ENCODE measurements at regions of chr19 and their contacts with region 1.

Region 1: DNA sequence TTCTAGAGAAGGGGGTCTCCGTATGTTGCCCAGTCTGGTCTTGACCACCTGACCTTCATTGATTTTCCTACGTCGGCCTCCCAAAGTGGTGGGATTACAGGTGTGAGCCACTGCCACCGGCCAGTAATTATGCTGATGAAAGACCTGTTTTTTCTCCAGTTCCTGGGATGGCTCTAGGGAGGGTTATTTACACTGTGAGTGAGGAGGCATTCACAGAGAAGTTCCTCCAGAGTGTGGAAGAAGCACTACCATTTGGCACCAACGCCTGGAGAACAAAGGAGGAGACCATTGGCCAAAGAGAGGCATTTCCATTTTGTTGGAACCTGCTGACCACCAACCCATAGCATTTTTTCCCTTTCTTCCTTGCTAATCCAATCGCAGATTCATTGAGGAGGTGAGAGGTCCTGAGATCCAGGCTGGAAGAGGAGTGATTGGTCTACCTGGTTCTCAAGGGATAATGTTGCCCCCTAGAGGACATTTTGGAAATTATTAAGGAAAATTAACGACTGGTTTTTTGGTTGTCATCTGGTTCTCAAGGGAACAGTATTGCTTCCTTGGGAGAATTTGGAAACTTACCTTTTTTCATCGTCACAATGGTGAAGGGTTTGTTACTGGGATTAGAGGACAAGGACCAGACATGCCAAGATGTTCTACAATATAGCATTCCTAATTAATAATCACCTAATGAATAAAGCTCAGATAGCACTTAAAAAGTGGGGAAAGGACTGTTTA is 5.5 kb upstream of the SAE1 start:
- DNase-seq: no peak
- ATAC-seq: peak; percentile 54
- H3K4me3 Mint-ChIP-seq: no peak overlapping the region
- H3K27ac Mint-ChIP-seq: no peak overlapping the region
- H3K4me1 Mint-ChIP-seq: peaks cover 3% of the 10 kb centered on the region
- H3K27me3 Mint-ChIP-seq: no peaks in the 10 kb centered on the region
- CTCF ChIP-seq: no peak

Region 2: DNA sequence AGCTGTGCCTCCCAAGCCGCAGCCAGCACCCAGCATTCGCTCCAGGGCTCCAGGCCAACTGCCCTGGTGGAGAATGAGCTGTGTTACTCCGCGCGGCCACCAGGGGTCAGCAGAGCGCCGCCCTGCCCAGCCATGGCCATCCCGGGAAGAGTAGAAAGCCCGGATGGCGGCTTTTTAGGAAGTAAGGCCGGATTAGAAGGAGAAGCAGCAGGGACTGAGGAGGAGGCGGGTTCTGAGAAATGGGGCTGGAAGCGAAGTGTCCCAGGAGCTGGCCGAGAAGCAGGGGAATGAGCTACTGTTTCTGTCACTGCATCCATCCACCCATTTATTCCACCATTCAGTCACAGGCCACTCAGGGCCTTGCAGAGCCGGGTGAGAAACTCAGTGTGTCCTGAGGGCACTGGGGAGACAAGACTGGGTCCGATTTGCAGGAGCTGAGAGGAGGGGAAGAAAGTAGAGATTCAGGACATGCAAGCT is 112.0 kb before region 1 on chr19:
- CTCF ChIA-PET with region 1: interaction called, 26 read pairs
- POLR2A ChIA-PET with region 1: interaction called, 3 read pairs
- intact Hi-C with region 1: loop called (anchors 1 kb)
- DNase-seq: peak; percentile 69
- ATAC-seq: peak; percentile 82
- H3K4me3 Mint-ChIP-seq: no peak overlapping the region
- H3K27ac Mint-ChIP-seq: no peak overlapping the region
- H3K4me1 Mint-ChIP-seq: peaks cover 8% of the 10 kb centered on the region
- H3K27me3 Mint-ChIP-seq: peaks cover 7% of the 10 kb centered on the region
- CTCF ChIP-seq: peak; percentile 99

Region 3: DNA sequence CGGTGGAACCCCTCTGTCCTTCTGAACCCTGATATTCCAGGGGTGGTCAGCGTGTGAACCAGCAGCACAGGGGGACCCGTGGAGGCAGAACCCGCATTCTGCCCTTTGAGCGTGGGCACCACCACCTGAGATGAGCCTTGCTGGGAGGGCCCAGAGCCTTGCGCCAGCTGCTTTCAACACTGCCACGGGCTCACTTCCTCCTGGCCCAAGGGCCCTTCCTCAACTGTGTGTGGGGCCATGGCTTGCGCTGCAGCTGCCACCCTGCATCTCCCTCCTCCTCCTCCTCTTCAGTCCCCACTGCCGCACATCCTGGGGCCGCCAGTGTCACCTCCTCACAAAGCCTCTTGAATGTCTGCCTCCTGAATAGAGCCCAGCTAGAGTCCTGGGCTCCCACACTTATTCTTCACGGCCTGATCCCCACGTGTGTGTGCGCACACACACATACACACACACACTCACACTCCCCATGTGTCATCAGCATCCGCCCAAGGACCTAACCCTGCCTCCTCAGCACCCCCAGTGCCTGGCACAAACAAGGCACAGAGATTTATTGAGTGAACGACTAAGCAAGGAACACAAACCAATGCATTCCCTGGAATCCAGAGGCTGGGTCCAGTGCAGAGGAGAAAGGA is 49.8 kb before region 1 on chr19:
- CTCF ChIA-PET with region 1: interaction called, 58 read pairs
- POLR2A ChIA-PET with region 1: interaction called, 8 read pairs
- intact Hi-C with region 1: loop called (anchors 1 kb)
- DNase-seq: no peak
- ATAC-seq: no peak
- H3K4me3 Mint-ChIP-seq: no peak overlapping the region
- H3K27ac Mint-ChIP-seq: no peak overlapping the region
- H3K4me1 Mint-ChIP-seq: peaks cover 4% of the 10 kb centered on the region
- H3K27me3 Mint-ChIP-seq: no peaks in the 10 kb centered on the region
- CTCF ChIP-seq: no peak

Region 4: DNA sequence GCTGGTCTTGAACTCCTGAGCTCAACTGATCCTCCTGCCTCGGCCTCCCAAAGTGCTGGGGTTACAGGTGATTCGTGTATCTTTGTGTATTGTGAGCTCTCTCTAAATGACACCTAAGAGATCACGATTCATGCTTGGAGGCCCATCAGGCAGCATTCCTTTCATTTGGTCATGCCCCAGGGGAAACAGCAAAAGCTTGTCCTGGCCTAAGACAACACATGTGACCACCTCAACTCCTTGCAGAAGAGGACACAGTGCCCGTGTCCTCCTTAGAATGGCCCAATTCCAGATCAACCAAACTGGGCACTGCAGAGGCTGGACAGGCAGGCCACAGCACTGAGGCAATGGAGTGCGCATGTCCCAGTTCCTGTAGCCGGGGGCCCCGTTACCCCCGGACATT is 44.0 kb before region 1 on chr19:
- CTCF ChIA-PET with region 1: interaction called, 58 read pairs
- POLR2A ChIA-PET with region 1: interaction called, 8 read pairs
- intact Hi-C with region 1: loop called (anchors 1 kb)
- DNase-seq: no peak
- ATAC-seq: no peak
- H3K4me3 Mint-ChIP-seq: no peak overlapping the region
- H3K27ac Mint-ChIP-seq: no peak overlapping the region
- H3K4me1 Mint-ChIP-seq: peaks cover 10% of the 10 kb centered on the region
- H3K27me3 Mint-ChIP-seq: no peaks in the 10 kb centered on the region
- CTCF ChIP-seq: no peak

Measured in activated B cell treated with CpG ODN at 0.5 μM for 24 hours (primary cell).